Sciatic nerve (tissue), 2 donors: ENCODE measurements at regions of chr14 and their contacts with region 1.

Region 1: GRCh38 chr14:89915114-89915878 is 39.2 kb downstream of the EFCAB11 start:
- DNase-seq: peak; percentile 73
- ATAC-seq: peak; percentile 72

Region 2: DNA sequence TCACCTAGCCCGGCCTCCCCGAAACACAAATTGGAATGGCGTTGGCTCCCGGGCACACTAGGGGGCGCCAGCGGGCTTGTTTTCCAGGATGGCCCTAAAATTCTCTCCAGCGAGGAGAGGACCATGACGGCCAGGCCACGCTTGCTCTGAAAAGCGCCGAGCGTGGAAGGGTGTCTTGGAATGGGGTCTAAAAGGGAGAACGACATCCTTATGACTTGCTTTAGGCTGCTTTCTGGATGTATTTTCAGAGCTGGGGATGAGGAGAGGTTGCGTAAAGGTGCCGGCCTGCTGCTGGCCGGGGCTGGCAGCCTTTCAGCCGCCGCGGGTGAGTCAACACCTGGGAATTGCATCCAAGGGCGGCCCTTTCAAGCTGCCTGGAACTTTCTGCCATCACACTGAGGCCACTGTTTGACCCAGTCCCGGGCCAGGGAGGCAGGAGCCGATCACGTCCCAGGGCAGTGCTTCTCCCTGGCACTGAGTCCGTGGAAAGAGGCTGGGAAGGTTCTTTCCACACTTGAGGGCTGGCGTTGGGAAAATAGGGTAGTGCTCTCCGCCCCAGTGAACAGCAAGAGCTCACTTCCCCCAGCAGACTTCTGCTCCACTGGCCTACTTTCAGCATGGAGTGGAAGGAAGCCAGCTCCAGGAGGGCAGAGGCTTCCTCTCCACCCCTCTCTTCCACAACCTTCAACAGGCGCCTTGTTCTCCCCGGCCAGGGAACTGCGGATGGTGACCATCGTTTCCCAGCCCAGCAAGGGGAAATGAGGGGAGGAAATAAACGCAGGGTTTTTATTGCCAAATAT is 874.6 kb before region 1 on chr14:
- intact Hi-C with region 1: loop called (anchors 5 kb)
- DNase-seq: peak; percentile 93
- ATAC-seq: peak; percentile 95